Naive thymus-derived CD4-positive, alpha-beta T cell (primary cell): ENCODE measurements at regions of chrX and their contacts with region 1.

Region 1: GRCh38 chrX:154097597-154098541 is at the start of gene MECP2:
- DNase-seq: peak; percentile 78 to 88 (median 86)
- ATAC-seq: peak; percentile 94
- H3K4me3 ChIP-seq: peak within 1 kb of the TSS; percentile 84
- H3K4me3 Mint-ChIP-seq: peak within 1 kb of the TSS; percentile 89 to 99 (median 96)
- H3K27ac ChIP-seq: peak within 1 kb of the TSS; percentile 84
- H3K27ac Mint-ChIP-seq: peak within 1 kb of the TSS; percentile 90 to 97 (median 94)
- H3K4me1 ChIP-seq: peaks cover 17 to 26% of the 10 kb centered on the region in 2 donors
- H3K4me1 Mint-ChIP-seq: peaks cover 14 to 51% (median 36%) of the 10 kb centered on the region in 7 donors
- H3K27me3 ChIP-seq: no peaks in the 10 kb centered on the region
- H3K27me3 Mint-ChIP-seq: peaks cover 0 to 4% (median 0%) of the 10 kb centered on the region in 5 donors
- total RNA-seq, gene MECP2: 72.7 to 155 (median 103) TPM

Region 2: DNA sequence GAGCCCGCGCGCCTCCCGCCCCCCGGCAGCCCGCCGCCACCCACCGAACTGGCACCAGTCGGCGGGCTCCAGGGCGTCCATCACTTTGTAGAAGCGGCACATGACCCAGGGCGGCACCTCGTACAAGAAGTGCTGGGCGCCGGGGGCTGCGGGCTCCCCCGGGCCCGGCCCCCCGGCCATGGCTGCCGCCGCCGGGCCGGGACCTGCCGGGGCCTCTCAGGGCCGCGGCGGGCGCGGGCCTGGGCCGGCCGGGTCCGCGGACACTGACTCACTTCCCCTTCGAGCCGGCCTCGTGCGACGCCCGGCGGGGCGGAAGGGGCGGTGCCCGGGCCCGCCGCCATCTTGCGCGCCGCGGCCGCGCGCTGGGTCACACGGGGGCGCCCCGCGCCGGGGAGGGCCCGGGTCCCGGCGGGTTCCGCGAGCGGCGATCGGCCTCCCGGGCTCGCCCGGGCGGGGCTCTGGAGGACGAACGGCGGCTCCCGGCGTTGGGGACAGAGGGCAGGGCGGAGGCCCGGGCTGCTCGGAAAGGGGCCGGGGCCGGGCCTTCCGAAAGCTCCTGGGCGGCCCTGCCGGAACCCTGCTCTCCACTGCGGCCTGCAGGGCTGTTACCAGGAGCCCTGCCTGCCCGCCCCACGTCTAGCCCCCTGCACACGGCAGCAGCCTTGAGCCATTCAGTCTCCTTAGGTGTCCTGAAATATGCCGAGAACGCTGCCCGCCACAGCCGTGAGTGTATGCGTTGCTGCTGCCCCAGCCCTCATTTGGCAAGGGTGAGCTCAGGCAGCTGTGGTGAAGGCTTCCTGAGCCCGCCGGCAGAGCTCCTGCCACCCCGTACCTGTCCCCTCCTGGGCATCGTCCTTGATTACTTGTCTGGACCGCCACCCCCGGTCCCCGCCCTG is 78.0 kb before region 1 on chrX and contains the start of gene IRAK1:
- CTCF ChIA-PET with region 1: no interaction called
- POLR2A ChIA-PET with region 1: interaction called, 7 read pairs
- intact Hi-C with region 1: loop called in 1 of 2 experiments (anchors 5 kb)
- DNase-seq: peak; percentile 20 to 77 (median 42)
- ATAC-seq: peak; percentile 89
- H3K4me3 ChIP-seq: peak within 1 kb of the TSS; percentile 52
- H3K4me3 Mint-ChIP-seq: peak within 1 kb of the TSS; percentile 83 to 93 (median 88)
- H3K27ac ChIP-seq: peak within 1 kb of the TSS; percentile 85
- H3K27ac Mint-ChIP-seq: peak within 1 kb of the TSS; percentile 85 to 97 (median 92)
- H3K4me1 ChIP-seq: peaks cover 4 to 6% of the 10 kb centered on the region in 2 donors
- H3K4me1 Mint-ChIP-seq: peaks cover 0 to 17% (median 11%) of the 10 kb centered on the region in 7 donors
- H3K27me3 ChIP-seq: no peaks in the 10 kb centered on the region
- H3K27me3 Mint-ChIP-seq: no peaks in the 10 kb centered on the region
- total RNA-seq, gene IRAK1: 50.6 to 120 (median 61.6) TPM

Region 3: DNA sequence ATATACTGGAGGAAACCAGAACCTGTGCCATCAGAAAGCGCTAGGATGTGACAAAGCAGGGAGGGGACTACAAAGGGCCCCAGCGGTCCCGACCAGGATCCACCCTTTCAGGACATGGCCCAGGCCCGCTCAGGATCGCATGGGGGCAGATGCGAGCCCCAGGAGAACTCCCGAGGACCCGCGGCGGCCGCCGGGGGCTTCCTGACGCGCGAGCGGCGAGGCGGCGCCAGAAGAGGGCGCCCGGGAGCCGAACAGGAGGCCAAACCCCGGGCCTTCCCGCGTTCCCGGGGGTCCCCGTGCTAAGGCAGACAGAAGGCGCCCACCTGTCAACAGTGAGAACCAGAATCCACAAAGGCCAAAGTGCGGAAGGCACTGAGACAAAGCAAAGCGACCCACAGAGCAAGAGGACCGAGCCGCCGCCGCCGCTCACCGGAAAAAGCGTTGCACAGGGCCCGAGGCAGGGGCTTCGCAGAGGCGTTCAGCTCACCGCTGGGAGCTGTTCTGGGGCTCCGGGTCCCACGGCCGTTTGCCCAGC is 38.8 kb after region 1 on chrX:
- CTCF ChIA-PET with region 1: no interaction called
- POLR2A ChIA-PET with region 1: interaction called, 8 read pairs
- intact Hi-C with region 1: loop called in 1 of 2 experiments (anchors 1 kb)
- DNase-seq: peak; percentile 56 to 73 (median 67)
- ATAC-seq: peak; percentile 89
- H3K4me3 ChIP-seq: peak overlapping the region; percentile 38
- H3K4me3 Mint-ChIP-seq: peak overlapping the region; percentile 69 to 90 (median 78)
- H3K27ac ChIP-seq: peak overlapping the region; percentile 73
- H3K27ac Mint-ChIP-seq: peak overlapping the region; percentile 78 to 95 (median 92)
- H3K4me1 ChIP-seq: peaks cover 16 to 32% of the 10 kb centered on the region in 2 donors
- H3K4me1 Mint-ChIP-seq: peaks cover 8 to 29% (median 17%) of the 10 kb centered on the region in 7 donors
- H3K27me3 ChIP-seq: no peaks in the 10 kb centered on the region
- H3K27me3 Mint-ChIP-seq: no peaks in the 10 kb centered on the region

Region 4: GRCh38 chrX:154308108-154308946 is 210.5 kb after region 1 on chrX:
- CTCF ChIA-PET with region 1: no interaction called
- POLR2A ChIA-PET with region 1: interaction called, 5 read pairs
- intact Hi-C with region 1: loop called in 1 of 2 experiments (anchors 1 kb)
- DNase-seq: peak; percentile 47 to 83 (median 71)
- ATAC-seq: peak; percentile 91
- H3K4me3 ChIP-seq: peak overlapping the region; percentile 20
- H3K4me3 Mint-ChIP-seq: peak overlapping the region; percentile 29 to 63 (median 46)
- H3K27ac ChIP-seq: no peak overlapping the region
- H3K27ac Mint-ChIP-seq: peak overlapping the region in 8 of 9 donors; percentile 2 to 85 (median 50)
- H3K4me1 ChIP-seq: peaks cover 26 to 35% of the 10 kb centered on the region in 2 donors
- H3K4me1 Mint-ChIP-seq: peaks cover 17 to 38% (median 29%) of the 10 kb centered on the region in 7 donors
- H3K27me3 ChIP-seq: no peaks in the 10 kb centered on the region
- H3K27me3 Mint-ChIP-seq: no peaks in the 10 kb centered on the region

Region 5: GRCh38 chrX:154378782-154379591 is 281.1 kb after region 1 on chrX and contains the start of gene EMD:
- CTCF ChIA-PET with region 1: no interaction called
- POLR2A ChIA-PET with region 1: no interaction called
- intact Hi-C with region 1: loop called (anchors 1 to 10 kb)
- DNase-seq: peak; percentile 88 to 98 (median 96)
- ATAC-seq: peak; percentile 87
- H3K4me3 ChIP-seq: peak within 1 kb of the TSS; percentile 68
- H3K4me3 Mint-ChIP-seq: peak within 1 kb of the TSS; percentile 73 to 88 (median 84)
- H3K27ac ChIP-seq: peak within 1 kb of the TSS; percentile 99
- H3K27ac Mint-ChIP-seq: peak within 1 kb of the TSS; percentile 72 to 95 (median 92)
- H3K4me1 ChIP-seq: peaks cover 10 to 18% of the 10 kb centered on the region in 2 donors
- H3K4me1 Mint-ChIP-seq: peaks cover 4 to 21% (median 12%) of the 10 kb centered on the region in 7 donors
- H3K27me3 ChIP-seq: no peaks in the 10 kb centered on the region
- H3K27me3 Mint-ChIP-seq: no peaks in the 10 kb centered on the region
- total RNA-seq, gene EMD: 53.5 to 141 (median 89.9) TPM

Region 6: DNA sequence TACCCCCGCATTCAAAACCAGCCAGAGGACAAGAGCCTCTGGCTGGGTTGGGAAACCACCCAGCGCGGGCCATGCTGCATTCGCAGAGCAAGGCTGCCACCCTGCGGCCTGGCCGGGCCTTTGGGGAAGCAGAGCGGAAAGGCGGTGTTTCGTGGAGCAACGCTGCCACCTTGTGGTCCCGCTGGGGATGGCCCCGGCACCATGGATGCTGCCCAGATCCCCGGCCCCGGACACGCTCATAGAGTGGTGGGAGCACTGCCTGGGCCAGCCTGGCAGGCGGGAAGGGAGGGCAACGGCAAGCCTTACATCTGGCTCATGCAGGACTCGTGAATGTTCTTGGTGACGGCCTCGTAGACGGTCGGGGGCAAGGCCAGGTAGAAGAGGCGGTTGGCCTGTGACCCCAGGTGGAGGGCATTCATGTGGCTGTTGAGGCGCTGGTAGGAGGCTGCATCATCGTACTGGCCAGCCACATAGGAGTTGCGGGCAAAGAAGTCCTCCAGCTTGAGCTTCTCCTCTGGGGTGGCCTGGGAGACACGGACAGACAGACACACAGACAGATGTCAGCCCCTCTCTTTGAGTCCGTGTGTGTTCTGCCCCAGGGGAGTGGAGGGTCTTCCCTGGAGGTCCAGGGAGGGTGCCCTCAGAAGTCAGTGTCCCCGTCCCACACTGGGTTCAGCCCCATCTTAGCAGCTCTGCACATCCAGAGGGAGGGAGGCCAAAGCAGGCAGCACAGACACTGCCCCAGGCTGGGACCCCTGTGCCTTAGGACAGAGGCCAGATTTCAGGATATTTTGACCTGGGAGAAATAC is 437.2 kb after region 1 on chrX:
- CTCF ChIA-PET with region 1: no interaction called
- POLR2A ChIA-PET with region 1: interaction called, 3 read pairs
- intact Hi-C with region 1: loop called in 1 of 2 experiments (anchors 5 kb)
- DNase-seq: peak; percentile 78 to 93 (median 87)
- ATAC-seq: peak; percentile 100
- H3K4me3 ChIP-seq: no peak overlapping the region
- H3K4me3 Mint-ChIP-seq: no peak overlapping the region
- H3K27ac ChIP-seq: peak overlapping the region; percentile 55
- H3K27ac Mint-ChIP-seq: peak overlapping the region in 5 of 9 donors; percentile 26 to 72 (median 67)
- H3K4me1 ChIP-seq: no peaks in the 10 kb centered on the region
- H3K4me1 Mint-ChIP-seq: peaks cover 0 to 13% (median 6%) of the 10 kb centered on the region in 7 donors
- H3K27me3 ChIP-seq: no peaks in the 10 kb centered on the region
- H3K27me3 Mint-ChIP-seq: no peaks in the 10 kb centered on the region